AG04450 (cell line): ENCODE measurements at regions of chr1 and their contacts with region 1.

Region 1: GRCh38 chr1:1916851-1917271 is 1.8 kb downstream of the CALML6 start:
- DNase-seq: no peak
- H3K4me3 ChIP-seq: no peak overlapping the region
- H3K27ac ChIP-seq: no peak overlapping the region
- H3K27me3 ChIP-seq: peaks cover 6% of the 10 kb centered on the region
- CTCF ChIP-seq: no peak

Region 2: GRCh38 chr1:1130206-1131120 is 786.4 kb before region 1 on chr1:
- CTCF ChIA-PET with region 1: no interaction called
- POLR2A ChIA-PET with region 1: interaction called, 16 read pairs
- DNase-seq: no peak
- H3K4me3 ChIP-seq: no peak overlapping the region
- H3K27ac ChIP-seq: no peak overlapping the region
- H3K27me3 ChIP-seq: peaks cover 16% of the 10 kb centered on the region
- CTCF ChIP-seq: no peak

Region 3: DNA sequence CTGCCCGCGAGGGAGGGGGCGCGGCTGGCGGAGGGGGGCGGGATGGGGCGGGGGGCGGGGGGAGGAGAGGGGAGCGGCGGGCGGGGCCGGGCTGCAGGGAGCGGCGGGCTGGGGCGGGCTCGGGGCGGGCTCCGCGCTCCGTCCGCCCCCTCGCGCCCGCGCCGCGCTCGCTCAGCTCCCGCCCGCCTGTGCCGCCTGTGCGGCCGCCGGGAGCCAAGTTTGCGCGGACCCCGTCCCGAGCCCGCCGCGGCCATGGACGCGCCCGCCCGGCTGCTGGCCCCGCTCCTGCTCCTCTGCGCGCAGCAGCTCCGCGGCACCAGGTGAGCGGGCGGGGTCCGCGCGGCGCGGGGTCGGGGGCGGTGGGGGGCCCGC is 102.3 kb after region 1 on chr1 and contains the start of gene GABRD:
- CTCF ChIA-PET with region 1: no interaction called
- POLR2A ChIA-PET with region 1: no interaction called
- DNase-seq: no peak
- H3K4me3 ChIP-seq: no peak within 1 kb of the TSS
- H3K27ac ChIP-seq: no peak within 1 kb of the TSS
- H3K27me3 ChIP-seq: peaks cover 67% of the 10 kb centered on the region
- CTCF ChIP-seq: no peak
- polyA plus RNA-seq, gene GABRD: not detected in 2 replicates